Heart right ventricle (tissue), 16 donors: ENCODE measurements at regions of chr5 and their contacts with region 1.

Region 1: DNA sequence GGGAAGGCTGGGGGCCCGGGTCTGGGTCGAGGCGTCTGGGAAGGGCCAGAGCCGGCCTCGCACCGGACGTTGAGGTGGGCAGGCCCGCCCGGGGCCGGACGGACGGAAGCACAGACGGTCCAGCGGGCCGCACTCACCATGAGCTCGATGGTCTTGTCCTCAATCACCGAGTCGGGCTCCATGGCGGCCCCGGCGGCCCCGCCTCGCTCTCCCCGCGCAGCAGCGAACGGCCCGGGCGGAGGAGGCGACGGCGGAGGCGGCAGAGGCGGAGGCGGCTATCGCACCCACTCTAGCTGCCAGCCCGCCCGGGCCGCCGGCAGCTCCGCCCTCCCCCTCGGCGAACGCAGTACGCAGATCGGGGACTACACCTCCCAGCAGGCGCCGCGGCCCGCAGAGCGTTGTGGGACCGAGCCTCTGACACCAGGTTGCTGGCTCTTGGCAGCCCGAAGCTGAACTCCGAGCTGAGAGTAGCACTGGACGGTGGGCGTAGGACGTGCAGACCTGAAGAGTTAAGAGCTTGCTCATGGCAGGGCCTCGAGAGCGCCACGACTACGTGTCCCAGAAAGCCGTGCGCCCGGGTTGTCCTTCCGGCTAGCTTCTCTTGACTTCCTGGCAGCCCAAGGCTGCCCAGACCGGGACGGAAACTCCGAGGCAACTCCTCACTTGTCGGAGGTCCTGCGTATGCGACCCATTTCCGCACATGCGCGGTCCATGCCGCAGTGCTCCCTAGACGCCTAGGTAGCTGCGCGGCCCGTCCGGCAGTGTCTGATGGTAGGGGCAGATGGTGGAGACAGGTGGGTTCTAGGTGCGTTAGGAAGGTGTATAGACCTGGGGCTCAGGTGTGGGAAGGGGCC is at the start of gene FBXW11:
- DNase-seq: peak; percentile 95 to 96
- ATAC-seq: peak; percentile 95 to 97 (median 96)
- H3K4me3 ChIP-seq: peak within 1 kb of the TSS; percentile 79 to 99 (median 91)
- H3K27ac ChIP-seq: peak within 1 kb of the TSS; percentile 90 to 99 (median 98)
- H3K4me1 ChIP-seq: peaks cover 20 to 65% (median 53%) of the 10 kb centered on the region in 9 donors
- H3K27me3 ChIP-seq: no peaks in the 10 kb centered on the region
- CTCF ChIP-seq: no peak
- total RNA-seq, gene FBXW11: 51.4 to 108 (median 83.3) TPM

Region 2: DNA sequence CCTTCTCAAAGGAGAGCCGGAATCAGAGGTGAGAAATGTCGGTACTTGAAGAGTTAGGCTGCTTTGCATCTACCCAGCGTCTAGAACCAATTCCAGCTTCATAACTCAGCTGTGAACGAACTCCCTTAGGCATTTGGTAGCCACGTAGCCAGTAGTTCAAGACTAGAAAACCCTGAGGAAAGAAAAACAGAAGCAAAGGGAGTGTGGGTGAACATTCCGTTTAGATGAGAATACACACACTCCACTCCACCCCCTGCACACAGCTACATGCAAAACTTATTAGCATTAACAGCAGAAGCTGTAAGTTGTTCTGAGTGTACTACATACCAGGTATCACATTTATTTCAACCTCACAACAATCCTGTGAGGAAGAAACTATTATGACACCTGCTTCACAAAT is 142.6 kb before region 1 on chr5:
- intact Hi-C with region 1: no loop called
- DNase-seq: no peak
- ATAC-seq: peak in 2 of 8 donors; percentile 47 to 48
- H3K4me3 ChIP-seq: no peak overlapping the region
- H3K27ac ChIP-seq: no peak overlapping the region
- H3K4me1 ChIP-seq: peaks cover 0 to 19% (median 2%) of the 10 kb centered on the region in 9 donors
- H3K27me3 ChIP-seq: no peaks in the 10 kb centered on the region
- CTCF ChIP-seq: no peak

Region 3: DNA sequence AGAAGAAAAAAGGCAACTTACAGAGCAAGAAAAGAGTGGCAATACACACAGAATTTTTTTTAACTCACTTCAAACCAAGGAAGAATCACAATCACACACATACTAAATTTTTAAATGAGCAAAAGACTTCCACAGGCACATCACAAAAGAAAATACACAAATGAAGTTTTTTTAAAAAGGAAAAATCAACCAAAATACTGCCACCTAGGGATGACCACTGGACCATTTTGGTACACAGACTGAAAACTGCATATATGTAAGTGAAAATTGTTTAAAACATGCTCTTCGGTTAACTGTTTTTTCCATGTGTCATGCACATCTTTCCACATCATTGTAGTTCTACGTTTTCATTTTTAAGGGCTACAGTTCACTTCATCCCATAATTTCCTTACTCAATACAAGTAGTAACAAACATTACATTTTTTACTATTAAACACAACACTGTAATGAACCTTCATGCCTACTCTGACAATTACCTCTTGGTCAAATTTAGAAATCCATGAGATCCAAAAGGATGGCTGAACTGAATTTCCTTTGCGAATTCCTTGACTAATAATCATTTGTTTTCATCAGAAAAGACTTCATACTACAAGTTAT is 79.1 kb before region 1 on chr5:
- intact Hi-C with region 1: loop called in 1 of 10 experiments (anchors 10 kb)
- DNase-seq: no peak
- ATAC-seq: no peak
- H3K4me3 ChIP-seq: no peak overlapping the region
- H3K27ac ChIP-seq: no peak overlapping the region
- H3K4me1 ChIP-seq: peaks cover 0 to 14% (median 7%) of the 10 kb centered on the region in 9 donors
- H3K27me3 ChIP-seq: no peaks in the 10 kb centered on the region
- CTCF ChIP-seq: peak in 2 of 9 donors; percentile 8 to 27

Region 4: DNA sequence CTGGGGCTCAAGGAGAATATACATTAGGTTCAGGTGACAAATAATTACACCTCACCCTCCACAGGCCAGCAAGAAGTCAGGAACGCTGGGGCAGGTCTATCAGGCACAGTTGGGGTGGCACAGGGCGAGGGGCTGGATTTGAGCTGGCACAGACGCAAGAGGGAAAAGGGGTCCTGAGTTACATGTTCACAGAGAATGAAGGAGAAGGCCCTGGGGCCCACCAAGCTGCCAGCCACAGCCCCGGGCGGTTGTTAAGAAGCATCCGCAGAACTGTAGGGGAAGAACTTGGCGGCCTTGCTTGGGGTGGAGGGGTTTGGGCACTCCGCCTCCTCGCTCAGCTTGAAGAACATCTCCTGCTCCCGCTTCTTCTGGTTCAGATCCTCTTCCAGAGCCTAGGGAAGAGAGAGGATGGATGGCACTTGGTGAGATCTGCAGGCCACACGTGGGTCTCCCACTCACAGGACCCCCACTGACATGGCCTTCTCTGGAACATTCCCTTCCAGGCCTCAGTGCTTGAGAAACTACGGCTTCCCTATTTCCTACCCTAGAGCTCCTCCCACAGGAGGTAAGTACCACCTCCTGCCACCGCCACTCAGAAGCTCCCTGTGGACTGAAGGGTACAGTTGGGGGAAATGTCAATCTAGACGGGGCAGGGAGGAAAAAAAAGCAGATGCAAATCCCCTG is 38.2 kb after region 1 on chr5:
- intact Hi-C with region 1: loop called in 1 of 10 experiments (anchors 5 kb)
- DNase-seq: no peak
- ATAC-seq: no peak
- H3K4me3 ChIP-seq: no peak overlapping the region
- H3K27ac ChIP-seq: peak overlapping the region in 1 of 10 donors; percentile 15
- H3K4me1 ChIP-seq: peaks cover 0 to 28% (median 14%) of the 10 kb centered on the region in 9 donors
- H3K27me3 ChIP-seq: no peaks in the 10 kb centered on the region
- CTCF ChIP-seq: no peak

Region 5: DNA sequence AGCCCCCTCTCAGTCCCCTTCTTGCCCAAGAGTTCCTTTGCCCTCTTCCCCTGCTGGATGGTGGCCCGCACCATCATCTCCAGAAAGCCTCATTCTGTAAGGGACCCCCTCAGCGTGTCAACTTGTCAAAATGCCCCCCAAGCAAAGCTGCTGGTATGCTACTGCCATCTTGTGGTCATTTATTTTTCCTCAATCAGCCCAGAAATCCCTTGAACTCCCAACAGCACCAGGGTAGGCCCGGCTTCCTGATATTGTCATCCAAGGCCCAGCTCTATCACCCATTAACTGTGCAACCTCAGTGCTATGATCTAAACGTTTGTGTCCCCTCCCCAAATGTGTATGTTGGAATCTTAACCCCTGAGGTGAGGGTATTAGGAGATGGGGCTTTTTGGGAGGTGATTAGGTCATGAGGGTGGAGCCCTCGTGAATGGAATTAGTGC is 53.1 kb after region 1 on chr5:
- intact Hi-C with region 1: loop called in 1 of 10 experiments (anchors 10 kb)
- DNase-seq: no peak
- ATAC-seq: peak in 3 of 8 donors; percentile 13 to 28 (median 26)
- H3K4me3 ChIP-seq: no peak overlapping the region
- H3K27ac ChIP-seq: no peak overlapping the region
- H3K4me1 ChIP-seq: no peaks in the 10 kb centered on the region
- H3K27me3 ChIP-seq: no peaks in the 10 kb centered on the region
- CTCF ChIP-seq: peak in 8 of 9 donors; percentile 41 to 70 (median 60)